Tibial artery (tissue), 4 donors: ENCODE measurements at regions of chr2 and their contacts with region 1.

Region 1: DNA sequence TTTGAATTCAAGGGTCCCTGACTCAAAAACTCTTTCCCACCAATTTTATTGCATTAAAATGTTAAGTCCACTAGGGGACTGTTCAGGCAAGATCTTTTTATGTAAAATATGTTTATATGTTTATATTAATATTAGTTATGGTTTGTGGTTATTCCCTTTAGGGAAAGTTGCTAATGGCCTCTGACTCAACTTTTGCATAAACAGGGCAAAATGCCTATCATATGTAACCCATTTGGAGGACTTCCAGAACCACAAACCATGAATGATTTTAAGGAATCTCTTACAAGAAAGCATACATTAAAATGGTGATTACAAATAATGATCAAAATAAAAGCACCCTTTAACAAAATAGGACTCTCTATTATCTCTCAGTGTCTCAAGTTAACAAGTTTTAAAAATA is 1484.5 kb upstream of the ZEB2 start:
- DNase-seq: no peak
- H3K4me3 ChIP-seq: no peak overlapping the region
- H3K27ac ChIP-seq: no peak overlapping the region
- H3K4me1 ChIP-seq: no peaks in the 10 kb centered on the region
- H3K27me3 ChIP-seq: no peaks in the 10 kb centered on the region
- CTCF ChIP-seq: no peak

Region 2: GRCh38 chr2:145927131-145927950 is 77.1 kb before region 1 on chr2:
- intact Hi-C with region 1: no loop called
- DNase-seq: no peak
- H3K4me3 ChIP-seq: no peak overlapping the region
- H3K27ac ChIP-seq: no peak overlapping the region
- H3K4me1 ChIP-seq: peaks cover 0 to 13% (median 0%) of the 10 kb centered on the region in 4 donors
- H3K27me3 ChIP-seq: no peaks in the 10 kb centered on the region
- CTCF ChIP-seq: no peak

Region 3: DNA sequence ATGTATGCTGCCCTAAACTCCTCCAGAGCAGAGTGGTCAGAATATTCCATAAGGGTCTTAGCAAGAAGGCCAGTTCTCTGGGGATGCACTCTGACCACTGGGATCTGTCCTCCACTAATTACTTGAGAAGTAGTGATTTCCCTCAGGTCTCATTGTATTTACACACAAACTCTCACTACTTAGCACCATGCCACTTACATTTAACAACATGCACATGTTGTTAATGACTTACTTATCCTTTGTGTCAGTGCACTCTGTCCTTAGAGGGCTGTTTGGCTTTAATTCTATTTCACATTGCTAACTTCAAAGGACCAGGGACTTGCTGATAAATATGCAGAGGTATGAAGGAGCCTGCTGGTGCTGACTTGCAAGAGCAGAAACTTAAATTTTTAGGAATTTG is 424.9 kb after region 1 on chr2:
- intact Hi-C with region 1: no loop called
- DNase-seq: no peak
- H3K4me3 ChIP-seq: no peak overlapping the region
- H3K27ac ChIP-seq: no peak overlapping the region
- H3K4me1 ChIP-seq: no peaks in the 10 kb centered on the region
- H3K27me3 ChIP-seq: no peaks in the 10 kb centered on the region
- CTCF ChIP-seq: no peak

Region 4: DNA sequence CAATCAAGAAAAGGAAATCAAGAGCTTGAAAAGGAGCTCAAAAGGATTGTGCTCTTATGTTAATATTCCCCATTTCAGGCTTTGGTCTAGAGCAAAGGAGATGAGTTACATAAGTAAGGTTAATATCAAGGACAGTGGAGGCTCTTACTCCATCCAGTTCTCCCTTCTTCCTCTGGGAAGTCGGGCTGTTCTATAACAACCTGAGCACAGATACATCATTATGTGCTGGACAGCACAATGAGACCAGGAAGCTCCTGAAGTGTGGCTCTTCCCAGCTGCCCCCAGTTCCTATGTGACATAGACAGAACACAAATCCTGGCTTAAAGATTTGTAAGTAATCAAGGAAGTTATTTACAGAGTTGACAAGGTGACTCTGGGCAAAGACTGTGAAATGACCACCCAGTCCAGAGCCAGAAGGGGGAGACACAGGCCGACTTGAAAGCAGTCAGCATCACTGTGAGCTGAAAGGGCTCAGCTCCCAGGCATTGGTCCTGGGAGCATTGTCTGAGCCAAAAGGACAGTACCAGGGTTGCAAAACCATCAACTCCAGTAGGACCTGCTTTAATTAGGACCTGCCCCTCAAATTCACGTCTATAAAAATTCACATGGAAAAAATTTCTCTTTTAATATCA is 922.7 kb after region 1 on chr2:
- intact Hi-C with region 1: loop called (anchors 5 kb)
- DNase-seq: peak; percentile 39 to 71
- H3K4me3 ChIP-seq: no peak overlapping the region
- H3K27ac ChIP-seq: no peak overlapping the region
- H3K4me1 ChIP-seq: no peaks in the 10 kb centered on the region
- H3K27me3 ChIP-seq: no peaks in the 10 kb centered on the region
- CTCF ChIP-seq: peak; percentile 32 to 49